Head of caudate nucleus (tissue), 42 donors: ENCODE measurements at regions of chr1 and their contacts with region 1.

Region 1: DNA sequence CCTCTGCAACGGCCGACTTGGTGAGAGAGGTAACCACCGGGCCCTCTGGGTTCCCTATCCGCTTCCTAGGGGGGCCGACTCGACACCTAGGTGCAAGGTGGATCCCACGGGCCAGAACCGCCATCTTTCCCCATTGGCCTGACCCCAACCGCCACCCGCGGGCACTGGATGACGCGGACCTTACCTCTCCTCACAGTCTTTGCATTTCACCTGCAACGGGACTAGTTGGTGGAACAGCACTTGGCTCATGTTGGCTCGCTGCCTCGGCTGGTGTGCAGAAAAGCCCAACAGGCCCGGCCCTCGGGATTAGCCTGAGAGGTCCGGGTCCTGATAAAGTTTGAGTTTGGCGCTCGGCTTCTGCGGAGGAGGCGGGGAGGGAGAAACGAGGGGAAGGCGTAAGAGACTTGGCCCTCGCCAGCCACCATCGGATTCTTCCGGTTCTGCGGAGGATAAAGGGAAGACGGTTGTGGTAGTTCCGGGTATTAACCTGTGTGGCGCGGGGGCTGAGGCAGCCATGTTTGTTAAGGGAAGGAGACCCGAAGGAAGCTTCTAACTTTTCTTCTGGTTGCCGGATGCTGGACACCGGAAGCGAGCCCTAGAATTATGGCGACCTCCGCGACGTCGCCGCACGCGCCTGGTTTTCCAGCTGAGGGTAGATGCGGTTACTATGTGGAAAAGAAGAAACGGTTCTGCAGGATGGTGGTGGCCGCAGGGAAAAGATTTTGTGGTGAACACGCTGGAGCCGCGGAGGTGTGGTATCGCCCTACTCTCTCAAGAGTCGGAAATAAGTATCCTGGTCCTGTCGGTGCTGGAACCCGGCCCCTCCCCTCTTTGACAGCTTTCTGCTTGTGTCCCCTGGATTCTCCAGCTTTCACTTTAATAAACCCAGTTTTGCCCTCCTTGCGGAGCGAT is at the starts of genes SASS6 and TRMT13:
- DNase-seq: peak; percentile 92 to 100 (median 98)

Region 2: GRCh38 chr1:99808391-99809115 is 324.3 kb before region 1 on chr1:
- intact Hi-C with region 1: loop called (anchors 10 kb)
- DNase-seq: peak in 22 of 42 donors; percentile 8 to 81 (median 34)

Region 3: GRCh38 chr1:99849744-99850458 is 282.9 kb before region 1 on chr1 and contains the start of gene AGL:
- intact Hi-C with region 1: loop called (anchors 10 kb)
- DNase-seq: peak; percentile 56 to 92 (median 84)

Region 4: GRCh38 chr1:100037927-100038659 is 94.7 kb before region 1 on chr1:
- intact Hi-C with region 1: loop called (anchors 10 kb)
- DNase-seq: peak; percentile 72 to 96 (median 92)

Region 5: GRCh38 chr1:100249537-100250257 is 116.9 kb after region 1 on chr1 and contains the start of gene DBT:
- intact Hi-C with region 1: loop called (anchors 5 kb)
- DNase-seq: peak; percentile 92 to 99 (median 98)

Region 6: GRCh38 chr1:100265931-100266740 is 133.3 kb after region 1 on chr1 and contains the start of gene RTCA:
- intact Hi-C with region 1: loop called (anchors 5 kb)
- DNase-seq: peak; percentile 91 to 98 (median 96)

Region 7: DNA sequence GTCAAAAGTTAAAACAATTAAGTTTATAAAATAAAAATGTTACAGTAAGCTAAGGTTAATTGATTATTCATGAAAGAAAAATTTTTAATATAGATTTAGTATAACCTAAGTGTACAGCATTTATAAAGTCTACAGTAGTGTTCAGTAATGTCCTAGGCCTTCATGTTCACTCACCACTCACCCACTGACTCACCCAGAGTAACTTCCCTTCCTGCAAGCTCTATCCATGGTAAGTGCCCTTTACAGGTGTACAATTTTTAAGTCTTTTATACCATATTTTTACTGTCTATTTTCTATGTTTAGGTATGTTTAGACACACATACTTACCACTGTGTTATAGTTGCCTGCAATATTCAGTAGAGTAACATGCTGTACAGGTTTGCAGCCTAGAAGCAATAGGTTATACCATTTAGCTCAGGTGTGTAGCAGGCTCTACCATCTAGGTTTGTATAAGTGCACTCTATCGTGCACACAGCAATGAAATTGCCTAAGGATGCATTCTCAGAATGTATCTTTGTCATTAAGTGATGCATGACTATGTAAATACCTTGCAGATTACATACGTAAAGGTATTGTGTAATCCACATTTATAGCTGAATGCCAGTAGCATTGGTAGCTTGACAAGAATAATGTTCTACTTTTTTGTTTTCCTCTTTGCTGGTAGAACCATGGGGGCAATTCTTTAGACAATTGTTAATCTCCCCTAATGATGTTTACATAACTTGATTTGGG is 369.4 kb after region 1 on chr1:
- intact Hi-C with region 1: no loop called
- DNase-seq: no peak

Region 8: DNA sequence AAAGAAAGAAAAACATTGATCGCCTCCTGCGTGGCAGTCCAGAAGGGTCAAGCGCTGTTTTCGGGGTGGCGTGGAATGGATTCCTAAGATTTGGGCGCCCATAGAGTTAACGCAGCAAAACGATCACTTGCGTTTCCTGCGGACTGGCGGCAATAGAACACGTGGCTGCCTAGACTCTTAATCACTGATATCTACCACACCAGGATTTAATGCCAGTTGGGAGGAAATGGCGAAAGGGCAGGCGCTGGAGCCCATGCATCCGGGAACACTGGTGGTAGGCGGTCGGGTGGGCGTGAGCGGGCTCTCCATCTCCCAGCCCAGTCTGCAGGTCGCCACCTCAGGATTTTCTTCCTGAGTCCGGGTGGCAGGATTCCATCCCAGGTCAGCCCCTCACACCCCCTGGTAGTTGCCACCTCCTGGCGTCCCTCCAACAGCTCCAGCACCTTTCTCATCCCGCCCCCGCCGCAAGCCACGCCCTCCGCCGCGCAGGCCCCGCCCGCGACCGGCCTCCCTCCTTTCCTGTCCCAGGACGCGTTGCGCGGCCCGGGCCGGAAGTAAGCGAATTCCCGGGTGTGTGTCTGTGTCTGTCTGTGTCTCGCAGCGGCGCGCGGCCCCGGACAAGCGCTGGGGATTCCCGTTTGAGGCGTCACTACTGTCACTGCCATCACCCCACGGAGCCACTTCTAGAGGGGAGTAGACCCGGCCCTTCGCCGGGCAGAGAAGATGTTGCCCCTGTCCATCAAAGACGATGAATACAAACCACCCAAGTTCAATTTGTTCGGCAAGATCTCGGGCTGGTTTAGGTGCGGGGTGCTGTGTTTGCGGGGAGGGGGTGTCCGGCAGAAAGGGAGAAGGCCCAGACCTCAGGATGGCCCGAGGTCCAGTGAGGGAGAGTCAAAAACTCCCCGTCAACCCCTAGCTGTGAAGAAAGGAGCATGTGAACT is 763.0 kb after region 1 on chr1 and contains the start of gene SLC30A7:
- intact Hi-C with region 1: loop called (anchors 10 kb)
- DNase-seq: peak; percentile 88 to 98 (median 96)